Stomach (tissue), 19 donors: ENCODE measurements at regions of chr11 and their contacts with region 1.

Region 1: DNA sequence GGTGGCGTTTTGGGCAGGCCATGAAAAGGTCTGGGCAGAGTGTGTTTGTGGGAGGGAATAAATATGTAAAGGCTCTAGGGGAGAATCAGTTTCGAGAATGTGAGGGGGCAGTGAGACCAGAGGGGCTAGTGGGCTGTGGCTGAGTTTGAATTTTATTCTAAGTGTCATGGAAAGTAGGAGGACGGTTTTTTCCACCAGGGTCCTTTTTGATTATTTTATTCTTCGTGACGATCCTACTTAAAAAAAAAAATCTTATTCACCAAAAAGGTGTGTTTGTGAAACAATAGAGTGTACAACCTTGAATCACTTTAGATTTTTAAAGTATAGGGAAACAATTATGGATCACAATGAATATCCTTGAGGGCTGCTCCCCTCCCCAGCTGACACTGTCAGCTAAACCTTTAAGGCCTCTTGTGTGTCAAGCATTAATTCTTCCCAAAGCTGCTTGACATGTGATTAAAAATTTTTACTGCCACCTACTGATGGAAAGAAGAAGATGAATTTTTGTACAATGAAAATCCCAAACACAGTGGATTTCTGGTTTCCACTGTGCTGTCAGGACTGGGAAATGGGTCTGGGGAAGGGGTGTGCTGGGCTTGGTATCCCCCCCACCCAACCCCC is 107.5 kb upstream of the OR4B1 start:
- DNase-seq: peak in 1 of 2 donors; percentile 67
- H3K4me3 ChIP-seq: peak overlapping the region; percentile 20 to 36 (median 29)
- H3K27ac ChIP-seq: peak overlapping the region; percentile 60 to 81 (median 75)
- H3K4me1 ChIP-seq: peaks cover 14 to 62% (median 17%) of the 10 kb centered on the region in 4 donors
- H3K27me3 ChIP-seq: no peaks in the 10 kb centered on the region
- CTCF ChIP-seq: peak in 3 of 7 experiments; percentile 26 to 35 (median 29)
- EP300 ChIP-seq: no peak
- POLR2A ChIP-seq: no peak

Region 2: GRCh38 chr11:47932544-47932943 is 176.6 kb before region 1 on chr11:
- intact Hi-C with region 1: loop called (anchors 10 kb)
- DNase-seq: no peak
- H3K4me3 ChIP-seq: no peak overlapping the region
- H3K27ac ChIP-seq: no peak overlapping the region
- H3K4me1 ChIP-seq: peaks cover 0 to 7% (median 3%) of the 10 kb centered on the region in 4 donors
- H3K27me3 ChIP-seq: no peaks in the 10 kb centered on the region
- CTCF ChIP-seq: no peak
- EP300 ChIP-seq: no peak
- POLR2A ChIP-seq: no peak

Region 3: DNA sequence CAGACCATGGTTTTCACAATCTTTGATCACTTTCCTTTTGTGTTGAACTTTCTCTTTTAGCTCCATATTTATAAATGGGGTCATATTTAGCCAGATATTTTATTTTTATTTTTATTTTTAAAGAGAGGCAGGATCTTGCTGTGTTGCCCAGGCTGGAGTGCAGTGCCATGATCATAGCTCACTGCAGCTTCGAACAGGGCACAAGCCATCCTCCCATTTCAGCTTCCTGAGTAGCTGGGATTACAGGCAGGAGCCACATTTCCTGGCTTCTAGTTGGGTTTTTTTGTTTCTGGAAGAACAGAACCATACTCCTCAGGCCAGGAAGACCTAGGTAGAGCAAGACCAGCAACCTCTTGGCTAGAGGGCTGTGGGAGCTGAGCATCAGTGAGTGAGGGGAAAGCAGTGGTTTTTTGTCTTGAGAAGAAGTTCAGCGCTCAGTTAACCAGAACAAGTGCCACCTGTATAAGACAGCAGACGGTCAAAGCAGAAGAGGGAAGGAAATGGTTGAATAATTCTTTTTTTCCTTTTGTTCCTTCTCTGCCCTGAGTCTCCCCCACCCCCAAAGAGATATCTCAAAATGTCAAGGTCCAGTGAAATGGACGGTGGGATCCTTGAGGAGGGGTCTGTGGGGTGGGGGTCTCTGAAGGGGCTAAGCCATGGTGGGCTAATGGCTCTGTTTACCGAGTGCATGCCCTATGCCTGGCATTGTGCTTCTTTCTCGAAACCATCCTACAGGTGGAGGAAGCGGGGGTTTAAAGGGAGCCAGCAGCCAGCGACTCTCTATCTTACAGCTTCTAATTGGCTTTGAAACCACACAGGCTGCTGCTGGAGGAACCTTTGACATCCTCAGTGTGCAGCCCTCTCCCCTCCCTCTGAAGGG is 65.8 kb before region 1 on chr11:
- intact Hi-C with region 1: loop called (anchors 10 kb)
- DNase-seq: no peak
- H3K4me3 ChIP-seq: no peak overlapping the region
- H3K27ac ChIP-seq: peak overlapping the region in 4 of 5 donors; percentile 1 to 66 (median 58)
- H3K4me1 ChIP-seq: peaks cover 21 to 73% (median 39%) of the 10 kb centered on the region in 4 donors
- H3K27me3 ChIP-seq: no peaks in the 10 kb centered on the region
- CTCF ChIP-seq: no peak
- EP300 ChIP-seq: no peak
- POLR2A ChIP-seq: no peak

Region 4: DNA sequence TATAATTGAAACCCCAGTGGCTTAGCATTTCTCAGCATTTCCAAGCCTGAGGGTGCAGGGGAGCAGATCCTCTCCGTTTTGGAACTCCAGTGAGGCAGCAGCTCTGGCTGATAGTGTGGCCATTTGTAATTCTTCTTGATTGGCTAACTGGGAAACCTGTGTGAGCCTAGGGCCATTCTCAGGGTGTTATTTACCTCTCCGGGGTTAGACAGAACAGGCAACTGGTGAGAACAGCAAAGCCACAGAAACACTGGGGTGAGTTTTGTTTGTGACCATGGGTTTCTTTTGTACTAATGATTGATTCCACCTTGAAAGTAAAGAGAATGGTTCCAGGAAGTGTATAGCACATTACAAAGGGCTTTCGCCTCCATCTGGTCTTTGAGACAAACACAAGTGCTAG is 133.3 kb after region 1 on chr11:
- intact Hi-C with region 1: no loop called
- DNase-seq: no peak
- H3K4me3 ChIP-seq: no peak overlapping the region
- H3K27ac ChIP-seq: no peak overlapping the region
- H3K4me1 ChIP-seq: no peaks in the 10 kb centered on the region
- H3K27me3 ChIP-seq: peaks cover 0 to 2% (median 0%) of the 10 kb centered on the region in 3 donors
- CTCF ChIP-seq: no peak
- EP300 ChIP-seq: no peak
- POLR2A ChIP-seq: no peak